Spleen (tissue), 13 donors: ENCODE measurements at regions of chr2 and their contacts with region 1.

Region 1: DNA sequence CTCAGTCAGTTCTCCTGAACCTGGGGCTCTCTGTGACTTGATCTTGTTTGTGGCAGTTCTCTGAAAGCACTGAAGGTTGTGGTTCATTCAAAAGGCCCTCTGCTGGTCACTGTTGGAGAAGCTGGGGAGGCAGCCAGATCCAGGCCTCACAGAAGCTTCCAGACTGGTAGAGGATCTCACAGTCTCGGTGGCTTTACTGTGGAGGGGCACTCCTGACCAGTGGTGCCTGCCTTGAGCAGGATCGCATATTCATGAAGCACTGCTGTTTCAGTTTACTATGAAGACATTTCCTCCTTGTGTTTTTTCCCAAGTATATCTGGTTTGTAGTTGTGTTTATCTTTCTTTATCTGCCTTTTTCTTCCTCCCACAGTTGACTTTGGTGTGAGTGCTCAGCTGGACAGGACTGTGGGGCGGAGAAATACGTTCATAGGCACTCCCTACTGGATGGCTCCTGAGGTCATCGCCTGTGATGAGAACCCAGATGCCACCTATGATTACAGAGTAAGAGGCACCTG is 133.9 kb downstream of the MAP4K4 start:
- DNase-seq: no peak
- H3K4me3 ChIP-seq: no peak overlapping the region
- H3K27ac ChIP-seq: peak overlapping the region in 3 of 8 donors; percentile 2 to 41 (median 9)
- H3K4me1 ChIP-seq: peaks cover 0 to 56% (median 21%) of the 10 kb centered on the region in 6 donors
- H3K27me3 ChIP-seq: no peaks in the 10 kb centered on the region
- CTCF ChIP-seq: peak; percentile 40 to 88 (median 74)
- POLR2A ChIP-seq: no peak

Region 2: GRCh38 chr2:101341901-101342624 is 489.3 kb before region 1 on chr2:
- intact Hi-C with region 1: loop called (anchors 5 kb)
- DNase-seq: peak; percentile 91
- H3K4me3 ChIP-seq: peak overlapping the region in 1 of 8 donors; percentile 4
- H3K27ac ChIP-seq: peak overlapping the region in 1 of 8 donors; percentile 23
- H3K4me1 ChIP-seq: peaks cover 0 to 29% (median 14%) of the 10 kb centered on the region in 6 donors
- H3K27me3 ChIP-seq: no peaks in the 10 kb centered on the region
- CTCF ChIP-seq: peak; percentile 70 to 92 (median 86)
- POLR2A ChIP-seq: no peak

Region 3: DNA sequence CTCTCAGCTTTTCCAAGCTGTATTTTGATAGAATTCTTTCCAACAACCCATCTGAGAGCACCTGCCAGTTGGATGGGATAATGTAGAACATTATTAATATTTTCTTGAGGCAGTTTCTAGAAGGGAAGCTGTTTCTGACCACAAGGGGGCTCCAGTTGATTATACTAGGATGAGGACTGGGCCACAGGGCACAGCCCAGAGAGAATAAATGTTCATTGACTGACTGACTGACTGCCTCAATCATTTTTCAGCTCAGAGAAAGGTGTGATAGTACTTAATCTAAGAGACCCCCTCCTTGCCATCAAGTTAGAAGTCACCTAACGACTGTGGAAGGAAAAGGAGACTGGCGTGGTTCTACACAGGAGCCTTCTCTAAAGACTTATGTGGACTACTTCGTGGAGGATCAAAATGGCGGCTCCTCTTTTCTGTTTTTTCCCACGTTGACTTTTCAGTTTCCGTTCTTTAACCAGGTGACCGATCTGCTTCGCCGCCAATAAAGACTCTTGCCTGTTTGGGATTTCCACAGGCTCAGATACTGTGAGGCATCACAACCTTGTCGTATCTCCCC is 412.2 kb before region 1 on chr2:
- intact Hi-C with region 1: loop called (anchors 5 kb)
- DNase-seq: no peak
- H3K4me3 ChIP-seq: no peak overlapping the region
- H3K27ac ChIP-seq: no peak overlapping the region
- H3K4me1 ChIP-seq: no peaks in the 10 kb centered on the region
- H3K27me3 ChIP-seq: no peaks in the 10 kb centered on the region
- CTCF ChIP-seq: peak; percentile 42 to 82 (median 73)
- POLR2A ChIP-seq: no peak

Region 4: GRCh38 chr2:101697124-101698013 is 134.0 kb before region 1 on chr2 and contains the start of gene MAP4K4:
- intact Hi-C with region 1: loop called (anchors 5 kb)
- DNase-seq: peak; percentile 95
- H3K4me3 ChIP-seq: peak within 1 kb of the TSS; percentile 51 to 72 (median 66)
- H3K27ac ChIP-seq: peak within 1 kb of the TSS; percentile 74 to 91 (median 86)
- H3K4me1 ChIP-seq: peaks cover 7 to 54% (median 38%) of the 10 kb centered on the region in 6 donors
- H3K27me3 ChIP-seq: no peaks in the 10 kb centered on the region
- CTCF ChIP-seq: peak in 4 of 11 experiments; percentile 17 to 46 (median 34)
- POLR2A ChIP-seq: no peak
- total RNA-seq, gene MAP4K4: 69.5 to 108 (median 73.1) TPM

Region 5: DNA sequence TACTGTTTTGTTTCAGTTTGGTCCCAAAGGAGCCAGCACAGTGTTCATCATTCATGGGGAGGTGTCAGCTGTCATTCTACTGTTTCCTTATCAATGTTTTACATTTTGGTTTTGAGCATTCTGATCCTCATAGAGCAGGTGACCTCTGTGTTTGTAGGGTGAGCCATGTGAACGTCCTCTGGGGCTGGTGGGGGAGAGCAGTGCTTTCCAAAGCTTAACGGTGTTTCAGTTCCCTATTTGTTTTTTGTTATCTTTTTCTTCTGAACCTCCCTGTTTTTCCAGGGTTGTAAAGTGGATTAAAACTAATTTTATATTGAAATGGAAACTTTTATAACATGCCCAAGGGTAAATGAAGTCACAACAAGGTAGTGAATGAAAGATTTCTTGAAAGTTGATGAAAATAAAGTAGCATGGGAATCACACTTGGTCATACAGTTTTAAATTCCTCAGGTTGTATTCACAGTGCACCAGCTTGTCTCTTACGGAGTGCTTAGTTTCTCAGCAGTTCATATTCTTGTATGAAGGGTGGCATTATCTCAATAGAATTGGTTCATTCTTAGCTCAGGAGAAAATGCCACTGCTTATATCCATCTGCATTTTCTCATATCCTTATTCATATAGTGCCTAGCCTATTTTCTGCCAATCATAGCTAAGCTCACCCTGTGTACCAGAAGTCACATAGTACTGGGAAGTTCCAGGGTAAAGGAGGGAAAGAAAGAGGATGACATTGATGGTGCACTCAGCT is 79.4 kb before region 1 on chr2:
- intact Hi-C with region 1: no loop called
- DNase-seq: no peak
- H3K4me3 ChIP-seq: no peak overlapping the region
- H3K27ac ChIP-seq: peak overlapping the region in 7 of 8 donors; percentile 38 to 74 (median 49)
- H3K4me1 ChIP-seq: peaks cover 27 to 81% (median 68%) of the 10 kb centered on the region in 6 donors
- H3K27me3 ChIP-seq: no peaks in the 10 kb centered on the region
- CTCF ChIP-seq: no peak
- POLR2A ChIP-seq: no peak